GM12878 (cell line): ENCODE measurements at regions of chr1 and their contacts with region 1.

Region 1: DNA sequence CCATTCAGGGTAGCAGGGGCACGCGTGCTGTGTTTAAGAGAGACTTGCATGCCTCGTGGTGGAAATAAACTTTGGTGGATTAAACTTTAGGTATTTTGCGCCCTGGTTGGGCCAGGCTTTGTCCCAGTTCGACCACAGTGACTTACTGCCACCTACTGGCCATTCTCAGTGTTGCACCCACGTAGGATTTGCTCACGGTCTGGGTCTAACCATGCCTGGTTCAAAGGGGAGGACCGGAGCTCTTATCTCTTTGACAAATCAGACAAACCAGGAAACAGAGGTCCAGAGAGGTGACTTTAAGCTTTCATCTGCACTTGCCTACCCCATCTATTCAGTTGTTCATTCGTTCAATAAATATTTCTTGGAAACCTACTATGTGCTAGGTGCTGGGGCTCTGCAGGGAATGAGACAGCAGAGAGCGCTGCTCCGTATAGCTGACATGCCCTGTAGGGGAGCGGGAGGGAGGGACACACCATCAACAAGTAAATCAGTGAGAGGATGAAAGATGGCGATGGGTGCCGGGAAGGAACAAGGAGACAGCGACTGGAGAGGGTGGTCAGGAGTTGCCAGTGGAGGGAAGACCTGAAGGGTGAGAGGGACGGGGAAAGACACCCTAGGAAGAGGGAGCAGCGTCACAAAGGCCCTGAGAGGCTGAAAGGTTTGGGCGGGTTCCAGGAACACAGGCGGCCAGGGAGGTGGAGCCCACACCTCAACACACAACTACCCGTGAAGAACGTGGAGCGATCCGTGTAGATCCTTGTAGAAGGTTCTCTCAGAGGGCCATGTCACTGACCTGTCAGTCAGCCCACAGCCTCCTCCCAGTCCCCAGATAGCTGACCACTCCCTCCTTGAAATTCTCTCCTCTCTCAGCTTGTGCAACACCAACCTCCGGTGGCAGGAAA is 27.2 kb upstream of the TINAGL1 start:
- DNase-seq: peak; percentile 91
- ATAC-seq: peak; percentile 91
- H3K4me3 ChIP-seq: peak overlapping the region; percentile 23; the same call in 1 of the 2 replicates
- H3K27ac ChIP-seq: peak overlapping the region; percentile 33; the same call in 1 of the 2 replicates
- H3K4me1 ChIP-seq: peaks cover 14% of the 10 kb centered on the region
- H3K27me3 ChIP-seq: no peaks in the 10 kb centered on the region
- CTCF ChIP-seq: peak; percentile 80 to 98 (median 92)
- EP300 ChIP-seq: no peak
- POLR2A ChIP-seq: peak; percentile 38; the same call in 1 of the 2 replicates
- RAD21 ChIP-seq: peak; percentile 87

Region 2: GRCh38 chr1:31296486-31297276 is 252.5 kb before region 1 on chr1 and contains the starts of genes SNRNP40 and ZCCHC17:
- CTCF ChIA-PET with region 1: interaction called, 6 read pairs
- POLR2A ChIA-PET with region 1: no interaction called
- RAD21 ChIA-PET with region 1: interaction called, 7 read pairs
- SMC1A ChIA-PET with region 1: interaction called, 3 read pairs
- in situ Hi-C with region 1: no loop called
- intact Hi-C with region 1: loop called (anchors 5 kb)
- DNase-seq: peak; percentile 98
- ATAC-seq: peak; percentile 97
- H3K4me3 ChIP-seq: peak within 1 kb of the TSS; percentile 96
- H3K27ac ChIP-seq: peak within 1 kb of the TSS; percentile 88
- H3K4me1 ChIP-seq: no peaks in the 10 kb centered on the region
- H3K27me3 ChIP-seq: no peaks in the 10 kb centered on the region
- CTCF ChIP-seq: peak in 1 of 3 experiments; percentile 8; a peak in 2 of 6 replicates
- EP300 ChIP-seq: peak in 1 of 2 experiments; percentile 28; a peak in 1 of 4 replicates
- POLR2A ChIP-seq: peak; percentile 99
- RAD21 ChIP-seq: no peak
- polyA plus RNA-seq, gene SNRNP40: 34.9 to 45.9 TPM
- polyA plus RNA-seq, gene ZCCHC17: 63.9 to 86.3 TPM

Region 3: DNA sequence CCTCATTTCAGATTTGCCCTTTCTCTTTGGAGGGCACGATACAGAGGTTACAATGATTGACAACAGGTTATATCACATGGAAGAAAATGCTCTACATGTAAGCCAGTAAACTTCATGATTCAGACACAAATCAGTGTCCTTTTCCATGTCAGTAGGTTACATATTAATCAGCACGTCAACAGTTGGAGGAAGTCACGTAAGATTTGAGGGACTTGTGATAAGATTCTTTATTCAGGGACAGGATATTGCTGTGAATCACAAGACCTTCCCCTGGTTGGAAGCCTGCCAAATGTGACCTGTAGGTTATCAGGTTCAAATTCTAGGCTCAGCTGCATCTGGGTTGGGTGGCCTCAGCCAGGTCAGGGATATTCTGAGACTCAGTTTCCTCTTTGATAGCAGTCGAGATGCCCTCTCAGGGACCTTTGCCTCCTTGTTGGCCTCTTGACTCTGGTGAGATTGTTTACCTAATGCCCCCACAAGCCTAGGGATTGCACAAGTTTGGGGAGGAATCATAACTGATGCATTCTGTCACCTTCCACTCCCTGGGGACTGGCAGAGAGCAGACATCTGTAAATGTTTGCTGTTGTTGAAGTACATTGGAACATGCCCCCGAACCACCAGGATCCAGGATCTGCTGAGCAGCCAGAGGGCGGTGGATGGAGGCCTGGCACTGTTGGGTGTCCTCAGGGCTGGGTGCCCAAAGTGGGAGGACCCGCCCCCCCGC is 104.3 kb before region 1 on chr1:
- CTCF ChIA-PET with region 1: interaction called, 8 read pairs
- POLR2A ChIA-PET with region 1: no interaction called
- RAD21 ChIA-PET with region 1: interaction called, 21 read pairs
- SMC1A ChIA-PET with region 1: interaction called, 11 read pairs
- in situ Hi-C with region 1: no loop called
- intact Hi-C with region 1: loop called (anchors 5 kb)
- DNase-seq: no peak
- ATAC-seq: no peak
- H3K4me3 ChIP-seq: no peak overlapping the region
- H3K27ac ChIP-seq: no peak overlapping the region
- H3K4me1 ChIP-seq: no peaks in the 10 kb centered on the region
- H3K27me3 ChIP-seq: no peaks in the 10 kb centered on the region
- CTCF ChIP-seq: no peak
- EP300 ChIP-seq: no peak
- POLR2A ChIP-seq: no peak
- RAD21 ChIP-seq: no peak

Region 4: GRCh38 chr1:31483012-31483946 is 65.9 kb before region 1 on chr1:
- CTCF ChIA-PET with region 1: interaction called, 19 read pairs
- POLR2A ChIA-PET with region 1: interaction called, 9 read pairs
- RAD21 ChIA-PET with region 1: interaction called, 19 read pairs
- SMC1A ChIA-PET with region 1: interaction called, 30 read pairs
- in situ Hi-C with region 1: no loop called
- intact Hi-C with region 1: loop called (anchors 2 kb)
- DNase-seq: peak; percentile 58
- ATAC-seq: peak; percentile 91
- H3K4me3 ChIP-seq: no peak overlapping the region
- H3K27ac ChIP-seq: peak overlapping the region; percentile 57
- H3K4me1 ChIP-seq: no peaks in the 10 kb centered on the region
- H3K27me3 ChIP-seq: no peaks in the 10 kb centered on the region
- CTCF ChIP-seq: no peak
- EP300 ChIP-seq: peak in 1 of 2 experiments; percentile 87; a peak in 3 of 4 replicates
- POLR2A ChIP-seq: no peak
- RAD21 ChIP-seq: no peak

Region 5: DNA sequence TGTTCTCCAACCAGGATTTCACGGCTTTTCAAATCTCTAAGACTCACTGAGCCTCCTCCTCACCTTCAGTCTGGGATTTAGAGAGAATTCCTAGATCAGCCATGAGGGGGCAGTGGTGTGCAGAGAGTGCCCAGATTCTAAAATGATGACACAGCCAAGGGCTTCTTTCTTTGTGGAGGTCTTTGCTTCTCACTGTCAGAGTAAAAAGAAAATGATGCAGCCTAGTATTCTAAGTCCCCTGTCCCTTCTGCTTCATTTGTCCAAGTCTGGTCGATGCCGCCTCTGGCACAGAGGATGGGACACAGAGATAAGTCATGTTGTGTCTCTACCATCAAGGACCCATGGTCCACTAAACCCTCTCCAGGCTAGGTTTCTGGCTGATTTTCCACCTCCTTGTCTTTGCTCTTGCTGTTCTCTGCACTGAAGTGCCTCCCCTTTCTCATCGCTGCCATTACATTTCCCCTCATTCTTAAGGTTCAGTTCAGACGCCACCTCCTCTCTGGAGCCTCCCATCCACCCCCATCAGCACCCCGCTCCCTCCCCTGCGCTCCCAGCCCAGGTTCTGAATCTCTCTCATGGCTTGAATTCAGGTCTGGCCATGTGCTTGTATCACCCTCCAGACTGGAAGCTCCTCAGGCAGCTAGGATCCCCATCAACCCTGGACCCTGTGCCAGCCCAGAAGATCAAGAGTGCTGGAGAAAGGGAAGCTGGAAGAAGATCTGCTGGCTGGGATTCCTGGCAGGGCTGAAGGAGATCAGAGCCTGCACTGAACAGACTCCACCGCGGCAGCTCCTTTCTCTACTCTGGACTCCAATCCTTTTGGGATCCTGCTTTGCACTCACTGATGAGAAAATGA is 15.2 kb after region 1 on chr1:
- CTCF ChIA-PET with region 1: interaction called, 38 read pairs
- POLR2A ChIA-PET with region 1: no interaction called
- RAD21 ChIA-PET with region 1: interaction called, 9 read pairs
- SMC1A ChIA-PET with region 1: interaction called, 12 read pairs
- in situ Hi-C with region 1: no loop called
- intact Hi-C with region 1: no loop called
- DNase-seq: no peak
- ATAC-seq: peak; percentile 91
- H3K4me3 ChIP-seq: no peak overlapping the region
- H3K27ac ChIP-seq: no peak overlapping the region
- H3K4me1 ChIP-seq: no peaks in the 10 kb centered on the region
- H3K27me3 ChIP-seq: no peaks in the 10 kb centered on the region
- CTCF ChIP-seq: peak; percentile 82 to 86 (median 83)
- EP300 ChIP-seq: no peak
- POLR2A ChIP-seq: no peak
- RAD21 ChIP-seq: peak; percentile 95

Region 6: DNA sequence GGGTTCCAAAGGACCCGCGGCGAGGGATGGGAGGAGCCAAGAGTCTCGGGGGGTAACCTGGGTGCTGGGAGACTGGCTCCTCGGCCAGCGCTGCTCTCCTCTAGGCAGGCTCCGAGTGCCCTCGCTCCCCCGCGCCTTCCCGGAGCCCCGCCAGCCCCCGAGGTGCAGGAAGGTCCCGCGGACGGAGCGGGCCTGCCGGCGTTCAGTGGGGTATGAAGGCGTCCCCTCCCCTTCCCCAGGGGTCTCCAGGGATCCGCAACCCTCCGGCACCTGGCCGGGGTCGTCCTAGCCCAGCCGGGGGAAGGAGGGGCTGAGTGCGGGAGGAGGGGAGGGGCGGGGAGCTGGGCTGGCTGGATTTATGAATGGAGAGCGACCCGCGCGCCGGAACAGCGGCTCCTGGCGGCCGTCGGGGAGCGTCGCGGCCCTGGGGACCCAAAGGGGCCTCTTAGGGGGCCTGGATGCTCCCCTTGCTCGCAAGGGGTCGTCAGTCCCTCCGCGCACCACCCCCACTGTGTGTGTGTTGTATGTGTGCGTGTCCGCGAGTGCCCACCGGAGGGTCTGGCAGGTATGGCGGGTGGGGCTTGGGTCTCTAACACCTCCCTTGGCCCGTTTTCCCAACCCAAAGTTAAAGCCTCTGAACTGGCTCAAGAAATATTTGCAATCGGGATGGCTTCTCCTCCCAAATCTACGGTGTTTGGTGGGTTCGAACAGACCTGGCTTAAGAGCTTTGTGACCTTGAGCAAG is 68.9 kb after region 1 on chr1:
- CTCF ChIA-PET with region 1: interaction called, 10 read pairs
- POLR2A ChIA-PET with region 1: no interaction called
- RAD21 ChIA-PET with region 1: interaction called, 6 read pairs
- SMC1A ChIA-PET with region 1: interaction called, 8 read pairs
- in situ Hi-C with region 1: no loop called
- intact Hi-C with region 1: no loop called
- DNase-seq: no peak
- ATAC-seq: peak; percentile 91
- H3K4me3 ChIP-seq: no peak overlapping the region
- H3K27ac ChIP-seq: no peak overlapping the region
- H3K4me1 ChIP-seq: no peaks in the 10 kb centered on the region; the same call in 1 of the 2 replicates
- H3K27me3 ChIP-seq: no peaks in the 10 kb centered on the region; a peak in 2 of 4 replicates
- CTCF ChIP-seq: peak; percentile 71 to 93 (median 71)
- EP300 ChIP-seq: no peak
- POLR2A ChIP-seq: no peak
- RAD21 ChIP-seq: peak; percentile 64